Naive thymus-derived CD4-positive, alpha-beta T cell (primary cell): ENCODE measurements at regions of chr1 and their contacts with region 1.

Region 1: GRCh38 chr1:161165742-161166668 is at the start of gene PPOX:
- DNase-seq: peak; percentile 78 to 95 (median 93)
- ATAC-seq: peak; percentile 94
- H3K4me3 ChIP-seq: peak within 1 kb of the TSS; percentile 93
- H3K4me3 Mint-ChIP-seq: peak within 1 kb of the TSS; percentile 86 to 98 (median 94)
- H3K27ac ChIP-seq: peak within 1 kb of the TSS; percentile 86
- H3K27ac Mint-ChIP-seq: peak within 1 kb of the TSS; percentile 93 to 99 (median 99)
- H3K4me1 ChIP-seq: peaks cover 14 to 17% of the 10 kb centered on the region in 2 donors
- H3K4me1 Mint-ChIP-seq: peaks cover 38 to 77% (median 66%) of the 10 kb centered on the region in 7 donors
- H3K27me3 ChIP-seq: no peaks in the 10 kb centered on the region
- H3K27me3 Mint-ChIP-seq: no peaks in the 10 kb centered on the region
- total RNA-seq, gene PPOX: 39.7 to 76.2 (median 43.4) TPM

Region 2: GRCh38 chr1:161132410-161133219 is 33.4 kb before region 1 on chr1 and contains the start of gene DEDD:
- CTCF ChIA-PET with region 1: interaction called, 5 read pairs
- POLR2A ChIA-PET with region 1: interaction called, 4 read pairs
- intact Hi-C with region 1: loop called (anchors 1 kb)
- DNase-seq: peak; percentile 80 to 93 (median 90)
- ATAC-seq: peak; percentile 97
- H3K4me3 ChIP-seq: peak within 1 kb of the TSS; percentile 96
- H3K4me3 Mint-ChIP-seq: no peak within 1 kb of the TSS
- H3K27ac ChIP-seq: peak within 1 kb of the TSS; percentile 89
- H3K27ac Mint-ChIP-seq: peak within 1 kb of the TSS in 4 of 9 donors; percentile 85 to 97 (median 94)
- H3K4me1 ChIP-seq: peaks cover 21 to 37% of the 10 kb centered on the region in 2 donors
- H3K4me1 Mint-ChIP-seq: peaks cover 29 to 49% (median 48%) of the 10 kb centered on the region in 7 donors
- H3K27me3 ChIP-seq: no peaks in the 10 kb centered on the region
- H3K27me3 Mint-ChIP-seq: no peaks in the 10 kb centered on the region
- total RNA-seq, gene DEDD: 34.3 to 43.0 (median 36.0) TPM

Region 3: DNA sequence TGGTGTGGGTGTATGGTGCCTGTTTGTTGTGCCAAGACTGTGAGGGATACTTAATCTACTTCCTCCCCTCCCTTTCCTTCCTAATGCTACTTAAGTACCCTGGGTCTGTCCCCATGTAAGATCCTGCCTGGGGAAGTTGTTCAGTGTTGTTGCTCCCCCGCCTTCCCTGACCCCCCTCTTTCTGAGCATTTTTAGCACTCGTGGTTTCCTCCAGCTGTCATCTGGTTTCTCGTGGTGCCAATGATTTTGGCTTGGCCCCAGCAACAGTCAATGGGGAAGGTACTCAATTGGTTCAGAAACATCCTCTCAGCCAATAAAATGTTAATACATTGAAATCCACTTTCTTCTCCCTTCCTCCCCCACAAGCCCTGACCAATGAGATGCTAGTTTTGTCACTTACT is 19.3 kb after region 1 on chr1:
- CTCF ChIA-PET with region 1: interaction called, 32 read pairs
- POLR2A ChIA-PET with region 1: interaction called, 81 read pairs
- intact Hi-C with region 1: loop called (anchors 1 kb)
- DNase-seq: peak; percentile 38 to 92 (median 87)
- ATAC-seq: peak; percentile 88
- H3K4me3 ChIP-seq: peak overlapping the region; percentile 24
- H3K4me3 Mint-ChIP-seq: peak overlapping the region; percentile 76 to 89 (median 84)
- H3K27ac ChIP-seq: peak overlapping the region; percentile 65
- H3K27ac Mint-ChIP-seq: peak overlapping the region; percentile 92 to 99 (median 97)
- H3K4me1 ChIP-seq: peaks cover 74 to 79% of the 10 kb centered on the region in 2 donors
- H3K4me1 Mint-ChIP-seq: peaks cover 65 to 90% (median 80%) of the 10 kb centered on the region in 7 donors
- H3K27me3 ChIP-seq: no peaks in the 10 kb centered on the region
- H3K27me3 Mint-ChIP-seq: no peaks in the 10 kb centered on the region

Region 4: DNA sequence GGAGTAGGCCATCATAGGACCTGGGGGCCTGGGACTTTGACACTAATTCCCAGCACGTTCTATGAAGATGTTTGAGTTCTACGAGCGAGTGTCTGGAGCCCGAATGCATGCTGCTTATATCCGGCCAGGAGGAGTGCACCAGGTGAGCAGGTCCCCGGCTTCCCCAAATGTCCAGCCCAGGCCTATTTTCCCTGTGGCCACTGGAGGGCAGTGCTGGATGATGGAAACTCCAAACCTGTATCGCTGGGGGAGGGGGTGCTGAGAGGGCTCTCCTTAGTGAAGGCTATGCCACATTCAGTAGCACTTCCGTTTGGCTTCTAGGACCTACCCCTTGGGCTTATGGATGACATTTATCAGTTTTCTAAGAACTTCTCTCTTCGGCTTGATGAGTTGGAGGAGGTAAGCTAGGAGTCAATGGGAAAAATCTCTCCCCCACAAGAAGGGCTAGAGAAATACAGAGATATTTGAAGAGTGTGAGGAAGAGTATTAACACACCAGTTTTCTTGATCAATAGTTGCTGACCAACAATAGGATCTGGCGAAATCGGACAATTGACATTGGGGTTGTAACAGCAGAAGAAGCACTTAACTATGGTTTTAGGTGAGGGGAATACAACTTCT is 43.9 kb after region 1 on chr1:
- CTCF ChIA-PET with region 1: interaction called, 19 read pairs
- POLR2A ChIA-PET with region 1: interaction called, 69 read pairs
- intact Hi-C with region 1: loop called in 1 of 2 experiments (anchors 1 kb)
- DNase-seq: peak; percentile 53 to 79 (median 73)
- ATAC-seq: peak; percentile 98
- H3K4me3 ChIP-seq: no peak overlapping the region
- H3K4me3 Mint-ChIP-seq: no peak overlapping the region
- H3K27ac ChIP-seq: peak overlapping the region; percentile 27
- H3K27ac Mint-ChIP-seq: peak overlapping the region in 8 of 9 donors; percentile 60 to 89 (median 66)
- H3K4me1 ChIP-seq: peaks cover 0 to 31% of the 10 kb centered on the region in 2 donors
- H3K4me1 Mint-ChIP-seq: peaks cover 12 to 49% (median 41%) of the 10 kb centered on the region in 7 donors
- H3K27me3 ChIP-seq: no peaks in the 10 kb centered on the region
- H3K27me3 Mint-ChIP-seq: no peaks in the 10 kb centered on the region

Region 5: GRCh38 chr1:161342821-161343220 is 176.8 kb after region 1 on chr1:
- CTCF ChIA-PET with region 1: no interaction called
- POLR2A ChIA-PET with region 1: no interaction called
- intact Hi-C with region 1: no loop called
- DNase-seq: no peak
- ATAC-seq: no peak
- H3K4me3 ChIP-seq: no peak overlapping the region
- H3K4me3 Mint-ChIP-seq: no peak overlapping the region
- H3K27ac ChIP-seq: no peak overlapping the region
- H3K27ac Mint-ChIP-seq: peak overlapping the region in 1 of 9 donors; percentile 59
- H3K4me1 ChIP-seq: no peaks in the 10 kb centered on the region
- H3K4me1 Mint-ChIP-seq: peaks cover 0 to 12% (median 4%) of the 10 kb centered on the region in 7 donors
- H3K27me3 ChIP-seq: no peaks in the 10 kb centered on the region
- H3K27me3 Mint-ChIP-seq: no peaks in the 10 kb centered on the region

Region 6: GRCh38 chr1:161382214-161383019 is 216.4 kb after region 1 on chr1:
- CTCF ChIA-PET with region 1: interaction called, 6 read pairs
- POLR2A ChIA-PET with region 1: interaction called, 3 read pairs
- intact Hi-C with region 1: loop called (anchors 1 to 5 kb)
- DNase-seq: peak in 6 of 9 donors; percentile 40 to 68 (median 59)
- ATAC-seq: peak; percentile 91
- H3K4me3 ChIP-seq: no peak overlapping the region
- H3K4me3 Mint-ChIP-seq: no peak overlapping the region
- H3K27ac ChIP-seq: no peak overlapping the region
- H3K27ac Mint-ChIP-seq: peak overlapping the region in 3 of 9 donors; percentile 53 to 76 (median 73)
- H3K4me1 ChIP-seq: peaks cover 0 to 3% of the 10 kb centered on the region in 2 donors
- H3K4me1 Mint-ChIP-seq: peaks cover 0 to 19% (median 13%) of the 10 kb centered on the region in 7 donors
- H3K27me3 ChIP-seq: no peaks in the 10 kb centered on the region
- H3K27me3 Mint-ChIP-seq: no peaks in the 10 kb centered on the region